ENCODE measurements at regions of chr4 and their contacts with region 1.

Region 1: DNA sequence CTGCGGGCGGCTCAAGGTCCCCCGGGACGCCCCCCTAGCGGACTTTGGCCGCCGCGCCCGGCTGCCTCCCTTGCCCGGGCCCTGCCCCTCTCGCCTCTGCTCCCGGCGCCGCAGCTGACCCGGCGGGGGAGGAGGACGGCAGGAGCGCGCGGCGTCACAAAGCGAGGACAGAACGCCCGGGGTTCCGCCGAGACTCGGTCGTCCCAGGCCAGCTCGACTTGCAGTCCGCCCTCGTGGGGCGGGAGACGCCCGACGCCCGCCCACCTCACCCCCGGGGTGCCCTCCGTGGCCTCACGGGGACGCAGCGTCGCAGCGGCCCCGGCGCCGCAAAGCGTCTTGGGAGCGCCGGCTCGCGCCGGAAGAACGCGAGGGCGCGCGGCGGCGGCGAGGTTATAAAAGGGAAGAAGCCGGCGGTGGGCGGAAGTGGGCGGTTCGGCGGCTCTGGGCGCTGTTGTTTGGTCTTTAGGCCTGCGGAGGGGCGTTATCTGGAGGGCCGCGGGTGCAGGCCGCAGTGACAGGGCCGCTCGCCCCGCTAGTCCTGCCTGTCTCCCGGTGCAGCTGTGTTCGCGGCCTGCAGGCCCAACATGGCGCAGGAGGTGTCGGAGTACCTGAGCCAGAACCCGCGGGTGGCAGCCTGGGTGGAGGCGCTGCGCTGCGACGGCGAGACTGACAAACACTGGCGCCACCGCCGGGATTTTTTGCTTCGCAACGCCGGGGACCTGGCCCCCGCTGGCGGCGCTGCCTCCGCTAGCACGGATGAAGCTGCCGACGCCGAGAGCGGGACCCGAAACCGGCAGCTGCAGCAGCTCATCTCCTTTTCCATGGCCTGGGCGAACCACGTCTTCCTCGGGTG is at the start of gene CDKN2AIP:
- DNase-seq: peak; percentile 98
- H3K4me3 Mint-ChIP-seq: peak within 1 kb of the TSS; percentile 96
- H3K27ac Mint-ChIP-seq: peak within 1 kb of the TSS; percentile 95
- H3K4me1 Mint-ChIP-seq: peaks cover 35% of the 10 kb centered on the region
- H3K27me3 Mint-ChIP-seq: no peaks in the 10 kb centered on the region
- total RNA-seq, gene CDKN2AIP: 22.7 and 23.1 TPM in 2 replicates

Region 2: GRCh38 chr4:182917182-182918043 is 527.0 kb before region 1 on chr4 and contains the start of gene DCTD:
- intact Hi-C with region 1: loop called (anchors 2 kb)
- DNase-seq: peak; percentile 95
- H3K4me3 Mint-ChIP-seq: peak within 1 kb of the TSS; percentile 87
- H3K27ac Mint-ChIP-seq: peak within 1 kb of the TSS; percentile 93
- H3K4me1 Mint-ChIP-seq: peaks cover 44% of the 10 kb centered on the region
- H3K27me3 Mint-ChIP-seq: peaks cover 5% of the 10 kb centered on the region
- total RNA-seq, gene DCTD: 125 and 129 TPM in 2 replicates

Region 3: DNA sequence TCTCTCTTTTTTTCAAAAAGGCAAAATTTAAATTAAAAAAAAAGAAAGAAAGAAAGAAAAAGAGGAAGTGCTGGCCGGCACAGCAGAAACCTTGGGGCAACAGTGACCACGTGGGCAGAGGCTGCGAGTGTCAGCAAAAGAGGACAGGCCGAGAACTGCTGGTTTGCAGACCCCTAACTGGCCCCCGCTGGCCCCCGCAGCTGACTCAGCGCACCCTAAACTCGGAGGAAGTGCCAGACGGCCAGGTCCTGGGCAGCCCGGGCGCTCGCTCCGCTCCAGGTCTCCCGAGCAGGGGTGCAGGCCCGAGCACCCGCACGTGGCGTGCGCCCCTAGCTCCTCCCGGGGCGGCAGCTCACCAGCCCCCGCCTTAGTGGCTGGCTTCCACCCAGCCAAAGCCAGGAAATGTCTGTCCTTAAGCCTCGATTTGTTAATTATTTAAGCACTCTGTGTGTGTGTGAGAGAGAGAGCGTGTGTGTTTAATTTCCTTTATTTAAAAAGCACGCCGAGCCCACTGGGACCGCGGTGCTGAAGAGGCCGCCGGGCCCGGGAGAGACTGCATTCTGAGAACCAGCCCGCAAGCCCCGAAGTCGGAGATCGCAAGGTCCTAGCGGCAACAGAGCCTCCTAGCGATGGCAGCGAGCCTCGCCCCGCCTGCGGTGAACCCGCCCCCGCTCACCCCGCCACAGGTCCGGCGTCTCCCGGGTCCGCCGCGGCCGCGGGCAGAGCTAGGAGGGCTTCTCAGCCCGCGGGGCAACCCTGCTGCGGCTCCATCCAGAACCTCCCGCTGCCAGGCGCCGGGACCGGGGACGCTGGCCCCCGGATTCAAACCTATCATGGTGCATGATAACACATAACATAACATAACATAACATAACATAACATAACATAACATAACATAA is 46.0 kb before region 1 on chr4:
- intact Hi-C with region 1: loop called (anchors 2 kb)
- DNase-seq: peak; percentile 88
- H3K4me3 Mint-ChIP-seq: peak overlapping the region; percentile 90
- H3K27ac Mint-ChIP-seq: peak overlapping the region; percentile 88
- H3K4me1 Mint-ChIP-seq: peaks cover 22% of the 10 kb centered on the region
- H3K27me3 Mint-ChIP-seq: peaks cover 33% of the 10 kb centered on the region

Region 4: GRCh38 chr4:183407128-183407585 is 37.3 kb before region 1 on chr4:
- intact Hi-C with region 1: loop called (anchors 2 kb)
- DNase-seq: peak; percentile 97
- H3K4me3 Mint-ChIP-seq: peak overlapping the region; percentile 80
- H3K27ac Mint-ChIP-seq: peak overlapping the region; percentile 52
- H3K4me1 Mint-ChIP-seq: peaks cover 9% of the 10 kb centered on the region
- H3K27me3 Mint-ChIP-seq: peaks cover 2% of the 10 kb centered on the region

Region 5: DNA sequence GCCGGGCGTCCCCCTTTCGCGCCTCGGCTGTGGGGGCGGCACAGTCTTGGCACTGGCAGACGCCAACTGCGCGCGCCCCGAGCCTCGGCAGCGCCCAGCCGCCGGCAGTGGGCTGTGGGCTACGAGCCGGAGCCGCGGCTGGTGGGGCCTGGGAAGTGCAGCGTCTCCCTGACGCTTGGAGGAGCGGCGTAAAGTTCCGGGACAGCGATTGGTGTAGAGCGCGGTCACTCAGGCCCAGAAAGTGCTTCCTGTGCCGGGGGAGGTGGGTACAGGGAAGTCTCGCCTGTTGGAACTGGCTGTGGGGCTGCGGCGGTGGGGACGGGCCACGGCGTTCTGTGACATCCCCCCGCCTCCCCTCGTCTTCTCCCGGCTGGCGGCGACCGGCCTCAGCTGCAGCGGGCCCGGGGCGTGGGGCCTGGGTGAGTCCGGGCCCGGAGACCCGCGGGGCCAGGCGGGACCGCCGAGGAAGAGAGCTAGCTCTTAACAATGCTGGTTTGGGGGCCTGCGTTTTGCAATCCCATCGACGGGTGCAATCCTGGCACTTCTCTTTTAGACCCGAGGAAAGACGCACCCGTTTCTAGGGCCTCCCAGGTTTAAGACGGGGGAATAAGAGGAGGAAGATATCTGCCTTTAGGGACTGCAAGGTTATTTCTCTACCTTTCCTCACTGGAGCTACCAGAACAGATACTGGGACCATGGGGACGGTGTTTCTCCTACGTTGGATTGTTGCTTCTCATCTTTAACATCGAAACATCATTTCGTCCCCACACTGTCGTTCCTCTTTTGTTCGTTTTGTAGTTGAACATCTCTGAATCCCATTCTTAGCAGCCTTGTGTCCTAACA is 214.8 kb after region 1 on chr4 and contains the starts of genes RWDD4 and TRAPPC11:
- intact Hi-C with region 1: loop called (anchors 1 kb)
- DNase-seq: peak; percentile 98
- H3K4me3 Mint-ChIP-seq: peak within 1 kb of the TSS; percentile 82
- H3K27ac Mint-ChIP-seq: peak within 1 kb of the TSS; percentile 96
- H3K4me1 Mint-ChIP-seq: peaks cover 30% of the 10 kb centered on the region
- H3K27me3 Mint-ChIP-seq: no peaks in the 10 kb centered on the region
- total RNA-seq, gene RWDD4: 27.3 and 31.5 TPM in 2 replicates
- total RNA-seq, gene TRAPPC11: 26.3 and 33.4 TPM in 2 replicates

Region 6: DNA sequence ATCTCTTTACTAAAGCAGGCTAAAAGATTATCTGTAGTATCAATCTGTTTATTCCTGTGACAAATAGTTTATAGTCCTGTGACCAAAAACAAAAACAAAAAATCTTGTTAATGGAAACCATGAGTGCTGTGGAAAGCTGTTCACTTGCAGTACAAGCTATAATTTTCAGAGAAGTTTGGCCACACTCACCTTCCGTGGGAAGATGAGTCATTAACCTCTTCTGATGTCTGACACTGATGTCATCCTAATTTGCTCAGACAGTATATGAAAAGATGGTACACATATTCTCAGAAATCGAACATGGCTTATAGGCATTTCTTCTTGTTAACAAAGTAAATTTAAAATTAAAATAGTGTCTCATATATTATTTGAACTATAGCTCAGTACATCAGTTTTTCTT is 793.2 kb after region 1 on chr4:
- intact Hi-C with region 1: loop called (anchors 10 kb)
- DNase-seq: peak; percentile 87
- H3K4me3 Mint-ChIP-seq: peak overlapping the region; percentile 68
- H3K27ac Mint-ChIP-seq: peak overlapping the region; percentile 94
- H3K4me1 Mint-ChIP-seq: peaks cover 51% of the 10 kb centered on the region
- H3K27me3 Mint-ChIP-seq: no peaks in the 10 kb centered on the region